Activated B cell treated with CpG ODN at 0.5 μM for 24 hours (primary cell): ENCODE measurements at regions of chr19 and their contacts with region 1.

Region 1: GRCh38 chr19:48363810-48364563 is at the starts of genes SYNGR4 and TMEM143:
- DNase-seq: peak; percentile 93
- ATAC-seq: peak; percentile 92
- H3K4me3 Mint-ChIP-seq: peak within 1 kb of the TSS; percentile 87
- H3K27ac Mint-ChIP-seq: peak within 1 kb of the TSS; percentile 93
- H3K4me1 Mint-ChIP-seq: peaks cover 19% of the 10 kb centered on the region
- H3K27me3 Mint-ChIP-seq: no peaks in the 10 kb centered on the region
- CTCF ChIP-seq: no peak
- total RNA-seq, gene SYNGR4: not detected in 2 replicates
- total RNA-seq, gene TMEM143: 10.2 and 10.5 TPM in 2 replicates

Region 2: GRCh38 chr19:48333467-48334384 is 30.3 kb before region 1 on chr19:
- CTCF ChIA-PET with region 1: interaction called, 14 read pairs
- POLR2A ChIA-PET with region 1: interaction called, 48 read pairs
- intact Hi-C with region 1: loop called (anchors 1 kb)
- DNase-seq: peak; percentile 90
- ATAC-seq: peak; percentile 66
- H3K4me3 Mint-ChIP-seq: peak overlapping the region; percentile 95
- H3K27ac Mint-ChIP-seq: peak overlapping the region; percentile 93
- H3K4me1 Mint-ChIP-seq: peaks cover 54% of the 10 kb centered on the region
- H3K27me3 Mint-ChIP-seq: no peaks in the 10 kb centered on the region
- CTCF ChIP-seq: no peak

Region 3: GRCh38 chr19:48419158-48419920 is 55.4 kb after region 1 on chr19:
- CTCF ChIA-PET with region 1: no interaction called
- POLR2A ChIA-PET with region 1: interaction called, 3 read pairs
- intact Hi-C with region 1: loop called (anchors 1 kb)
- DNase-seq: peak; percentile 61
- ATAC-seq: peak; percentile 87
- H3K4me3 Mint-ChIP-seq: peak overlapping the region; percentile 84
- H3K27ac Mint-ChIP-seq: peak overlapping the region; percentile 56
- H3K4me1 Mint-ChIP-seq: peaks cover 18% of the 10 kb centered on the region
- H3K27me3 Mint-ChIP-seq: peaks cover 26% of the 10 kb centered on the region
- CTCF ChIP-seq: no peak

Region 4: GRCh38 chr19:48492925-48493717 is 129.1 kb after region 1 on chr19:
- CTCF ChIA-PET with region 1: no interaction called
- POLR2A ChIA-PET with region 1: interaction called, 8 read pairs
- intact Hi-C with region 1: loop called (anchors 2 kb)
- DNase-seq: peak; percentile 71
- ATAC-seq: peak; percentile 69
- H3K4me3 Mint-ChIP-seq: peak overlapping the region; percentile 74
- H3K27ac Mint-ChIP-seq: no peak overlapping the region
- H3K4me1 Mint-ChIP-seq: peaks cover 42% of the 10 kb centered on the region
- H3K27me3 Mint-ChIP-seq: peaks cover 33% of the 10 kb centered on the region
- CTCF ChIP-seq: no peak

Region 5: DNA sequence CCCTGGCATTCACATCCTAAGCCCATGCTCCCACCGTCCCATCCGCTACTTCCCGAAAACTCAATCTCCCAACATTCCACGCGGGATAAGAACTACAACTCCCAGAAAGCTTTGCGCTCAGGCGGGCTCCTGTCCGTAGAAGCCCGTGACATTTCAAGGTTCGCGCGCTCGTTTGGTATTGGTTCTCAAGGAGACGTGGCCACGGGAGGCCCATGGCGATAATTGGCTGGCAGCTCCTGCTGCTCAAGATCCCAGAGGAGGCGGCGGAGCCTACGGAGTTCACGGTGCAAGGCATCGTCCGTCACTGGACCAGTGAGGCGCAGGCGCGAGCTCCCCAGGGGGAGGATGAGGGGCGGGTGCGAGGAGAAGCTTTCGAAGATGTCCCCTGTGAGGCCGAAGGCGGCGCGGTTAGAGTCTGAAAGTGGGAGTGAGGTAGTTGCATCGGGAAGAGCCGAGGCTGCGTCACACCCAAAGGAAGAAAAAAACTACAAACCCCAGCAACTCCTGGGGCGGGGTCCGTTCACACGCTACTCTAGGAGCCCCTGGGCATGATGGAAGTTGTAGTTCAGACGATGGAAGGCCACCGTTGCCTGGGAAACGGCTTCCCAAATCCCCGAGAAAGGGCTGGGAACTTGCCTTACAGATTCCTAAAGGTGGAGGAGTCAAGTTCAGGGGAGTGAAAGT is 356.8 kb after region 1 on chr19:
- CTCF ChIA-PET with region 1: no interaction called
- POLR2A ChIA-PET with region 1: interaction called, 10 read pairs
- intact Hi-C with region 1: no loop called
- DNase-seq: peak; percentile 81
- ATAC-seq: peak; percentile 86
- H3K4me3 Mint-ChIP-seq: peak overlapping the region; percentile 95
- H3K27ac Mint-ChIP-seq: peak overlapping the region; percentile 92
- H3K4me1 Mint-ChIP-seq: peaks cover 24% of the 10 kb centered on the region
- H3K27me3 Mint-ChIP-seq: no peaks in the 10 kb centered on the region
- CTCF ChIP-seq: no peak